Activated CD4-positive, alpha-beta T cell treated with anti-CD3 and anti-CD28 coated beads, Interleukin-2, amount 10 ng/mL, durations not matched to agents 7 days and 5 days (primary cell): ENCODE measurements at regions of chr19 and their contacts with region 1.

Region 1: DNA sequence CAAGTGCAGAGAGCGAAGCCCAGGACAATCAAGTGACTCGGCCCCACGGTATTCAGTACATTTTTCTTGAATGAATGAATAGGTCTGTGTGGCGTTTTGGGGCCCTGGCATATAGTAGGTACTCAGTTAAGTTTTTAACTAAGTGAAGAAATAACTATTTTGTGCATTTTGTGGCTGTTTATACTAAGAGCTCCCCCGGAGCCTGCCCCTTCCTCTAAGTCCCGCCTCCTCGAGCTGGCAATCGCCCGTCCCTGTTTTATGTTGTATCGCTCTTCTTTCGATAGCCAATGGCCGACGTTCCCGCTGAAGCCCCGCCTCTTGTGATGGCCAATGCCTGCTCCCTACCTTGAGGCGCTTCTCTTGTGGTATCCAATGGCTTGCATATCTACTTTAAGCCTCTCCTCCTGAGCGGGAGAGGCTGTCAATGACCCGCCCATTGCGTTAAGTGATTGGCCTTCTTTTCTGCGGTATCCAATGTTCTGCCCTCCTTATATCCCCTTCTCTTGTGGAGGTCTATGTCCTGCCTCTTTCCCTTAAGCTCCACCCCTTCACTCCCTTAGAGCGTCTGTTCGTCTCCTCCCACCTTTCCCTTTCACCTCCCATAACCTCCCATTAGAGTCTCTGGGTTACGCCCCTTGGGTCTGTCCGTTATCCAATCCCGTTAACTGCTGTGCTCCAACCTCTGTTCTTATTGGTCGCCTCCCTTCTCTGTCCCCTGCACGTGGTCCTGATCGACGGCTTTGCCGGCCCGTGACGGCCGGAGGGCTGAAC is 509 bp upstream of the HDGFL2 start:
- DNase-seq: peak; percentile 99
- H3K4me3 Mint-ChIP-seq: no peak overlapping the region
- H3K27ac Mint-ChIP-seq: no peak overlapping the region
- H3K4me1 Mint-ChIP-seq: peaks cover 23% of the 10 kb centered on the region
- H3K27me3 Mint-ChIP-seq: no peaks in the 10 kb centered on the region

Region 2: GRCh38 chr19:4518345-4519171 is 47.0 kb after region 1 on chr19 and contains the start of gene PLIN4:
- CTCF ChIA-PET with region 1: interaction called, 4 read pairs
- POLR2A ChIA-PET with region 1: interaction called, 10 read pairs
- DNase-seq: no peak
- H3K4me3 Mint-ChIP-seq: no peak within 1 kb of the TSS
- H3K27ac Mint-ChIP-seq: peak within 1 kb of the TSS; percentile 60
- H3K4me1 Mint-ChIP-seq: no peaks in the 10 kb centered on the region
- H3K27me3 Mint-ChIP-seq: no peaks in the 10 kb centered on the region
- total RNA-seq, gene PLIN4: not detected